Heart right ventricle (tissue), 16 donors: ENCODE measurements at regions of chr13 and their contacts with region 1.

Region 1: GRCh38 chr13:98142380-98143156 is at the start of gene FARP1:
- DNase-seq: peak; percentile 73 to 79
- ATAC-seq: peak; percentile 92 to 97 (median 94)
- H3K4me3 ChIP-seq: peak within 1 kb of the TSS; percentile 60 to 94 (median 72)
- H3K27ac ChIP-seq: peak within 1 kb of the TSS; percentile 35 to 89 (median 70)
- H3K4me1 ChIP-seq: peaks cover 3 to 28% (median 20%) of the 10 kb centered on the region in 9 donors
- H3K27me3 ChIP-seq: peaks cover 0 to 47% (median 0%) of the 10 kb centered on the region in 7 donors
- CTCF ChIP-seq: peak in 7 of 9 donors; percentile 8 to 70 (median 58)
- total RNA-seq, gene FARP1: 13.4 to 72.9 (median 24.7) TPM

Region 2: DNA sequence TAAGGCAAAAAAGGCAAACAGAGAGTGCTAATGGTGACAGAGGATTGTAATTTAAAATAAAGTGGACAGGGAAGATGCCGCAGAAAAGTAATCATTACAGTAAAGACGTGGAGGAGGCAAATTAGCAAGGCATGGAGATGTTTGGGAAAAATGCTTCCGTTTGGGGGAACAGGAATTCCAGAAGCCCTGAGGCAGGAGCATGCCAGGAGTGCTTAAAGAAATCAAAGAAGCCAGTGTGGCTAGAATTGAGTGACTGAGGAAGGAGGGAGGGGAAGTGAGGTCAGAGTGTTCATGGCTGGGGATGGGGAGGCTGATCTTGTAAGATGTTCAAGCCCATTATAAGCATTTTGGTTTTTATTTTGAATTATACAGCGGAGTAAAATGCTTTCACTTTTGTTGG is 1249.7 kb before region 1 on chr13:
- intact Hi-C with region 1: no loop called
- DNase-seq: no peak
- ATAC-seq: no peak
- H3K4me3 ChIP-seq: no peak overlapping the region
- H3K27ac ChIP-seq: no peak overlapping the region
- H3K4me1 ChIP-seq: no peaks in the 10 kb centered on the region
- H3K27me3 ChIP-seq: no peaks in the 10 kb centered on the region
- CTCF ChIP-seq: no peak

Region 3: GRCh38 chr13:98384739-98385138 is 242.2 kb after region 1 on chr13:
- intact Hi-C with region 1: loop called in 1 of 10 experiments (anchors 5 kb)
- DNase-seq: no peak
- ATAC-seq: no peak
- H3K4me3 ChIP-seq: no peak overlapping the region
- H3K27ac ChIP-seq: no peak overlapping the region
- H3K4me1 ChIP-seq: peaks cover 0 to 29% (median 11%) of the 10 kb centered on the region in 9 donors
- H3K27me3 ChIP-seq: no peaks in the 10 kb centered on the region
- CTCF ChIP-seq: no peak

Region 4: GRCh38 chr13:98429977-98430736 is 287.6 kb after region 1 on chr13:
- intact Hi-C with region 1: loop called in 2 of 10 experiments (anchors 10 kb)
- DNase-seq: no peak
- ATAC-seq: no peak
- H3K4me3 ChIP-seq: no peak overlapping the region
- H3K27ac ChIP-seq: no peak overlapping the region
- H3K4me1 ChIP-seq: peaks cover 0 to 12% (median 0%) of the 10 kb centered on the region in 9 donors
- H3K27me3 ChIP-seq: no peaks in the 10 kb centered on the region
- CTCF ChIP-seq: no peak

Region 5: DNA sequence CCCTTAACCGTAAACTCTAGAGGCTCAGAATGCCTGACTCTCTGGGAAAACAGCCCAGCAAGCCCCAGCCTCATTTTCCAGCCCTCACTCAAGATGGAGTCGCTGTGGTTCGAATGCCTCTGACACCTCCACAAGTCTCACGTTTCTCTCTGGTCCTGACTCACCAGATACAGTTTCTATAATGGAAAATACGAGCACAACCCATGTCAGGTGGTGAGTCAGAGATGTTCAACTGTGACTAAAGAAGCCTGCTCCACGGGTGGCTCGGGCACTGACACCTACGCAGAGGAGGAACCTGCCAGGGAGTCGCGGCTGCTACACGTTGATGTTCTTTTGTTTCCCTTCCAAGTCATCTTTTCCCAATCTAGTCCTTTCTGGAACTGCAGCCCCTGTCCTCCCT is 521.5 kb after region 1 on chr13:
- intact Hi-C with region 1: loop called in 4 of 10 experiments (anchors 10 kb)
- DNase-seq: no peak
- ATAC-seq: no peak
- H3K4me3 ChIP-seq: no peak overlapping the region
- H3K27ac ChIP-seq: no peak overlapping the region
- H3K4me1 ChIP-seq: no peaks in the 10 kb centered on the region
- H3K27me3 ChIP-seq: no peaks in the 10 kb centered on the region
- CTCF ChIP-seq: no peak

Region 6: DNA sequence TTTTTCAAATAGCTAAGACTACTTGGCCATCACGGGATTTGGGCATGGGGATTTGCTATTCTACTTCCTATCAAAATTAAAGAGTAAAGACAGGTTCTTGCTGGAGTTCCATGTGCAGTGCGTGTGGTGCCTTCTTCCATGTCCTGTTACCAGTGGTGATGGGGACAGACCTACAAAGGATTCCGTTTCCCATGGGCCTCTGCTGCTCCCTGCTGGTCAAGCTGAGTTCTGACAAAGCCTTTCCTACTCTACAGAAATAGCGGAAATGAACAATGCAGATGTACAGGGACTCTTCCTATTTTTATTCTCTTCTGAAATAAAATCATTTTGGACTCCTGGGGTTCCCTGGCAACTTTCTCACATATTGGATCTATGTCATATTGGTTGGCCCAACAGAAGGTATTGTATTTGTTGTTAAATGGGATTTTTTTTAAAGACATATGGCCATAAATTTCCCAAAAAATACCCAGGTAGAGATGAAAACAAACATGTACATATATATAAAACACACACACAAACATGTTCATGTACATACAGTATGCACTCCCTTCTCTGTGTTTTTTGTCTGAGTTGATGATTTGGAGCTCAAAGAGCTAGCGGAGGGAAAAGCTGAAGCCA is 700.4 kb after region 1 on chr13:
- intact Hi-C with region 1: loop called in 1 of 10 experiments (anchors 10 kb)
- DNase-seq: peak; percentile 72 to 74
- ATAC-seq: peak; percentile 65 to 90 (median 84)
- H3K4me3 ChIP-seq: no peak overlapping the region
- H3K27ac ChIP-seq: peak overlapping the region in 1 of 10 donors; percentile 48
- H3K4me1 ChIP-seq: peaks cover 0 to 23% (median 8%) of the 10 kb centered on the region in 9 donors
- H3K27me3 ChIP-seq: no peaks in the 10 kb centered on the region
- CTCF ChIP-seq: peak; percentile 71 to 90 (median 89)